K562 (cell line): ENCODE measurements at regions of chr2 and their contacts with region 1.

Region 1: DNA sequence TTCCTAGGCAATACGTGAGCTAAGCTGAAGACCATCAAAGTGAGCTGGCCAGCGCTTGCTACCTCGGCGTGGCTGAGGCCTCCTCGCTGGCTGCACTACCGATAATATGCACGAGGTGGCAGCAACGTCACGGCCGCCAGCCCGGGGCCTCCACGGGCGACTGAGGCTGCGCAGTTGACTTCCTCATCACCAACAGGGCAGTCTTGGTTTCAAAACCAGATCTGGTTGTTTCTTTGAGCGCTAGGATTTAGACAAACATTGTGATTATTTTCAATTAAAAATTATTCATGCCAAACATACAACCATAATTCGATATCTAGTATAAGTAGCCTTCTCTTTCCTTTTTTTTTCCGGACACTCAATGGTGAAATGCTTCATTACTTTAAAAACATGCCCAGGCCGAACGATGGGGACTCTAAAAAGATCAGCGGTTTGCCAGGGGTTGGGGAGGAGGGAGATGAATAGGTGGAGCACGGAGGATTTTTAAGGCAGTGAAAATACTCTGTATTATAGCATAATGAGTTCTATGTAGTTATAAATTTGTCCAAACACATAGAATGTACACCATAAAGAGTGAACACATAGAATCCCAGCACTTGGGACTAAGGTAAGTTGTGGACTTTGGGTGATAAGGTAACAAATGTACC is 52.0 kb downstream of the CYBRD1 start:
- DNase-seq: peak; percentile 90 to 99 (median 97)
- ATAC-seq: peak; percentile 99
- H3K4me3 ChIP-seq: no peak overlapping the region
- H3K27ac ChIP-seq: no peak overlapping the region
- H3K4me1 ChIP-seq: peaks cover 0 to 3% of the 10 kb centered on the region in 2 experiments; a peak in 1 of 5 replicates
- H3K27me3 ChIP-seq: no peaks in the 10 kb centered on the region
- CTCF ChIP-seq: peak; percentile 96 to 99 (median 97)
- EP300 ChIP-seq: 0 out of 2 replicates have a peak, but pooled peaks have one; percentile 3
- POLR2A ChIP-seq: no peak
- RAD21 ChIP-seq: peak; percentile 95 to 97

Region 2: GRCh38 chr2:171515672-171516298 is 58.5 kb before region 1 on chr2:
- CTCF ChIA-PET with region 1: no interaction called
- POLR2A ChIA-PET with region 1: no interaction called
- in situ Hi-C with region 1: no loop called
- intact Hi-C with region 1: no loop called
- DNase-seq: peak in 2 of 4 experiments; percentile 37 to 75
- ATAC-seq: peak; percentile 50
- H3K4me3 ChIP-seq: no peak overlapping the region
- H3K27ac ChIP-seq: peak overlapping the region; percentile 0; the same call in 1 of the 3 replicates
- H3K4me1 ChIP-seq: peaks cover 18 to 54% of the 10 kb centered on the region in 2 experiments; a peak in 4 of 5 replicates
- H3K27me3 ChIP-seq: no peaks in the 10 kb centered on the region
- CTCF ChIP-seq: no peak
- EP300 ChIP-seq: no peak
- POLR2A ChIP-seq: no peak
- RAD21 ChIP-seq: no peak

Region 3: GRCh38 chr2:171529914-171530313 is 44.4 kb before region 1 on chr2:
- CTCF ChIA-PET with region 1: no interaction called
- POLR2A ChIA-PET with region 1: no interaction called
- in situ Hi-C with region 1: no loop called
- intact Hi-C with region 1: no loop called
- DNase-seq: peak; percentile 48 to 69 (median 66)
- ATAC-seq: peak; percentile 85
- H3K4me3 ChIP-seq: no peak overlapping the region
- H3K27ac ChIP-seq: no peak overlapping the region
- H3K4me1 ChIP-seq: peaks cover 0 to 9% of the 10 kb centered on the region in 2 experiments; a peak in 3 of 5 replicates
- H3K27me3 ChIP-seq: no peaks in the 10 kb centered on the region
- CTCF ChIP-seq: peak; percentile 69 to 89 (median 80)
- EP300 ChIP-seq: no peak
- POLR2A ChIP-seq: no peak
- RAD21 ChIP-seq: peak in 1 of 2 experiments; percentile 26; a peak in 2 of 4 replicates

Region 4: GRCh38 chr2:171798252-171798741 is 224.0 kb after region 1 on chr2:
- CTCF ChIA-PET with region 1: no interaction called
- POLR2A ChIA-PET with region 1: no interaction called
- in situ Hi-C with region 1: no loop called
- intact Hi-C with region 1: loop called (anchors 10 kb)
- DNase-seq: no peak
- ATAC-seq: peak; percentile 65
- H3K4me3 ChIP-seq: no peak overlapping the region
- H3K27ac ChIP-seq: peak overlapping the region; percentile 26; the same call in 1 of the 3 replicates
- H3K4me1 ChIP-seq: no peaks in the 10 kb centered on the region
- H3K27me3 ChIP-seq: no peaks in the 10 kb centered on the region
- CTCF ChIP-seq: no peak
- EP300 ChIP-seq: no peak
- POLR2A ChIP-seq: no peak
- RAD21 ChIP-seq: peak in 1 of 2 experiments; percentile 16; a peak in 1 of 4 replicates